Activated CD4-positive, alpha-beta T cell treated with anti-CD3 and anti-CD28 coated beads for 36 hours (primary cell): ENCODE measurements at regions of chr14 and their contacts with region 1.

Region 1: GRCh38 chr14:93906341-93907329 is 20.5 kb upstream of the FAM181A start:
- DNase-seq: peak; percentile 83
- ATAC-seq: peak; percentile 80
- H3K4me3 Mint-ChIP-seq: no peak overlapping the region
- H3K27ac Mint-ChIP-seq: no peak overlapping the region
- H3K4me1 Mint-ChIP-seq: peaks cover 2% of the 10 kb centered on the region
- H3K27me3 Mint-ChIP-seq: peaks cover 3% of the 10 kb centered on the region

Region 2: GRCh38 chr14:93655078-93655750 is 251.4 kb before region 1 on chr14:
- CTCF ChIA-PET with region 1: interaction called, 4 read pairs
- POLR2A ChIA-PET with region 1: no interaction called
- intact Hi-C with region 1: loop called (anchors 1 kb)
- DNase-seq: no peak
- ATAC-seq: no peak
- H3K4me3 Mint-ChIP-seq: no peak overlapping the region
- H3K27ac Mint-ChIP-seq: no peak overlapping the region
- H3K4me1 Mint-ChIP-seq: no peaks in the 10 kb centered on the region
- H3K27me3 Mint-ChIP-seq: peaks cover 29% of the 10 kb centered on the region

Region 3: DNA sequence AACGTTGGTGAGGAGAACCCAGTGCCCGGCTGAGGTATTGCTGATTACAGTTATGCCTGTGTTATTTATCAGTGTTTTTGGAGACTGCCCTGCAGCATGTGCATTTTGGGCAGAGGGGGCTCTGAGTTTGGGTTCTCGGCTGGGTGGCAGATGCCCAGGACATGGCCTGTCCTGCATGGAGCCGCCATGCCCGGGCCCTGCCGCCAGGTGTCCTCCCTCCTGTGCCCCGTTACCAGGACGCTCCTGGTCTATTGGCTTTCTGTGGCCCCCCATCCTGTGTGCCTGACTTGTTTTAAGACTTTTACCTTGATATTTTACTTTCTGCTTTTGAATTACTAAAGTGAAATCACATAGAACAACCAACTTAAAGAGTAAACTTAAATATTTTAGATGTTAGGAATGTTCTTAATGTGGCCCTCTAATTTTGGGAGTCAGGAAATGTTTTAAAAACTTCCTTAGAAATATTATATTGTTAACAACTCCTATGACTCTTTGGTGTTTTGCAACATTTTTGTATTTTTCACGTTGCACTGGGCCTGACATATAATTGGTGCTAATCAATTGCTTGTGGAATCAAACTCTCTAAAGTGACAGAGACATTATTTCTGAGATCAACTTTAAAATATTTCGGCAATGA is 170.1 kb before region 1 on chr14:
- CTCF ChIA-PET with region 1: no interaction called
- POLR2A ChIA-PET with region 1: no interaction called
- intact Hi-C with region 1: loop called in 1 of 2 experiments (anchors 5 kb)
- DNase-seq: peak; percentile 18
- ATAC-seq: no peak
- H3K4me3 Mint-ChIP-seq: no peak overlapping the region
- H3K27ac Mint-ChIP-seq: no peak overlapping the region
- H3K4me1 Mint-ChIP-seq: no peaks in the 10 kb centered on the region
- H3K27me3 Mint-ChIP-seq: peaks cover 3% of the 10 kb centered on the region

Region 4: GRCh38 chr14:93804646-93805045 is 102.0 kb before region 1 on chr14:
- CTCF ChIA-PET with region 1: no interaction called
- POLR2A ChIA-PET with region 1: no interaction called
- intact Hi-C with region 1: no loop called
- DNase-seq: peak; percentile 35
- ATAC-seq: no peak
- H3K4me3 Mint-ChIP-seq: no peak overlapping the region
- H3K27ac Mint-ChIP-seq: no peak overlapping the region
- H3K4me1 Mint-ChIP-seq: peaks cover 10% of the 10 kb centered on the region
- H3K27me3 Mint-ChIP-seq: peaks cover 6% of the 10 kb centered on the region

Region 5: GRCh38 chr14:93892923-93893558 is 13.6 kb before region 1 on chr14:
- CTCF ChIA-PET with region 1: interaction called, 11 read pairs
- POLR2A ChIA-PET with region 1: no interaction called
- intact Hi-C with region 1: no loop called
- DNase-seq: peak; percentile 84
- ATAC-seq: peak; percentile 60
- H3K4me3 Mint-ChIP-seq: no peak overlapping the region
- H3K27ac Mint-ChIP-seq: no peak overlapping the region
- H3K4me1 Mint-ChIP-seq: no peaks in the 10 kb centered on the region
- H3K27me3 Mint-ChIP-seq: peaks cover 17% of the 10 kb centered on the region